Right cardiac atrium (tissue), 5 donors: ENCODE measurements at regions of chr2 and their contacts with region 1.

Region 1: GRCh38 chr2:172931918-172932520 is 143.6 kb upstream of the MAP3K20 start:
- DNase-seq: peak; percentile 70 to 83 (median 73)
- ATAC-seq: peak in 1 of 2 donors; percentile 29
- H3K4me3 ChIP-seq: peak overlapping the region; percentile 37
- H3K27ac ChIP-seq: no peak overlapping the region
- H3K4me1 ChIP-seq: peaks cover 10% of the 10 kb centered on the region
- H3K27me3 ChIP-seq: no peaks in the 10 kb centered on the region

Region 2: DNA sequence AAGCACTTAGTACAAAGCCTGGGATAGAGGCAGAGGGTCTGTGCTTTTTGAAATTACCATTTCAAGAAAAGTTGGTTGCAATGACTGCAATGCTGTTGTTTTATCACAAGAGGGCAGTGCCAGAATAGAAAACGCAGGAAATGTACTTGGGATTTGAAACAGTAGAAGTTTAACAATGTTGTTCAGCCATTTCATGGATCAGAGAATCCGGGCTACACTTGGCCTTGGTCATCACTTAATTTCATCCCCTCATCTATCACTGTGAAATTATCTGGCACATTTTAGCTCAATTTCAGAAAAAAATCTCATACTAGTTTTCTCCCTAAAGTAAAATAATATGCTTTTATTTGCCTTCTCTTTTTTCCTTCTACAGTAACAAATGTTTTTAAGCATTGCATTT is 125.5 kb before region 1 on chr2:
- intact Hi-C with region 1: loop called in 3 of 4 experiments (anchors 5 kb)
- DNase-seq: no peak
- ATAC-seq: peak; percentile 55 to 65
- H3K4me3 ChIP-seq: no peak overlapping the region
- H3K27ac ChIP-seq: no peak overlapping the region
- H3K4me1 ChIP-seq: no peaks in the 10 kb centered on the region
- H3K27me3 ChIP-seq: no peaks in the 10 kb centered on the region

Region 3: DNA sequence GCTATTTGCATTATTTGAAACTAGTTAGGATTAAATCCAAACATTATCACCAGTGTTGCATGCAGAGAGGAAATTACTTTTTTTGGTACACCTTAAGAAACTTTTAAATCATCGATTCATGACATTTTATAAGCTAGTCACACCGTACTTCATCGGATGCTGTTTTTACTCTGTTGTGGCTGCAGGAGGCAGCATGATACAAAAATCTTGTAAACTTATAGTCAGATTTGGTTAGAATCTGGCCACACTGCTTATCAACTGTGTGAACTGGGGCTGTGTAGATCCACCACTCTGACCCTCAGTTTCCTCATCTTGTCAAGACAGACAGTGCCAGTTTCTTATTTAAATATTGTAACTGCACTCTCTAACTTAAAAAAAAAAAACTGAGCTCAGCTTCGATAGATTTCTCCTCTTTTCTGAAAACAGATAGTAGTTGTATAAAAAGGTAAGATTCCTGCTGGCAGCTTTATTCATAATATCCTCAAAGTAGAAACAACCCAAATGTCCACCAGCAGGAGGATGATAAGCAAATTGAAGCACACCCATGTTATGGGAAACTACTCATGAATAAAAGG is 118.6 kb before region 1 on chr2:
- intact Hi-C with region 1: loop called (anchors 2 to 5 kb)
- DNase-seq: no peak
- ATAC-seq: peak in 1 of 2 donors; percentile 76
- H3K4me3 ChIP-seq: no peak overlapping the region
- H3K27ac ChIP-seq: no peak overlapping the region
- H3K4me1 ChIP-seq: no peaks in the 10 kb centered on the region
- H3K27me3 ChIP-seq: no peaks in the 10 kb centered on the region

Region 4: DNA sequence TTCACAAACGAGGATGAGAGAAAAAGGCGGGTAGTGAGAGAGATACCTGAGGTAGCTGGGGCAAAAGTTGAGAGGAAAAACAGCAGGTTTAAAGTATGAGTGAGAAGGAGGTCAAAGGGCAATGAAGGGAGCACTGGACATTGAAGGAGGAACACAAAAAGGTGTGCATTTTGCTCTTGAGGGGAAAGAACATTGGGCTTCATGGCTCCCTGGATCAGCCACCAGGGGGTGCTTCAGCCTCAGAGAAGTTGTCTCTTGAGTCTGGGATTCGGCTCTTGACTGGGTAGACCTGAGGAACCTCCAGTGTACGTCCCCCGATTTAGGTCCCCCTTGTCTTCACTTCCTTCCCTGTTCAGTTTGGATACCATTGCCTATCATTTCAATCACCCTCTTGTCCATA is 67.8 kb before region 1 on chr2:
- intact Hi-C with region 1: loop called in 3 of 4 experiments (anchors 5 kb)
- DNase-seq: peak; percentile 47 to 84 (median 69)
- ATAC-seq: peak; percentile 40 to 74
- H3K4me3 ChIP-seq: no peak overlapping the region
- H3K27ac ChIP-seq: no peak overlapping the region
- H3K4me1 ChIP-seq: peaks cover 8% of the 10 kb centered on the region
- H3K27me3 ChIP-seq: no peaks in the 10 kb centered on the region

Region 5: DNA sequence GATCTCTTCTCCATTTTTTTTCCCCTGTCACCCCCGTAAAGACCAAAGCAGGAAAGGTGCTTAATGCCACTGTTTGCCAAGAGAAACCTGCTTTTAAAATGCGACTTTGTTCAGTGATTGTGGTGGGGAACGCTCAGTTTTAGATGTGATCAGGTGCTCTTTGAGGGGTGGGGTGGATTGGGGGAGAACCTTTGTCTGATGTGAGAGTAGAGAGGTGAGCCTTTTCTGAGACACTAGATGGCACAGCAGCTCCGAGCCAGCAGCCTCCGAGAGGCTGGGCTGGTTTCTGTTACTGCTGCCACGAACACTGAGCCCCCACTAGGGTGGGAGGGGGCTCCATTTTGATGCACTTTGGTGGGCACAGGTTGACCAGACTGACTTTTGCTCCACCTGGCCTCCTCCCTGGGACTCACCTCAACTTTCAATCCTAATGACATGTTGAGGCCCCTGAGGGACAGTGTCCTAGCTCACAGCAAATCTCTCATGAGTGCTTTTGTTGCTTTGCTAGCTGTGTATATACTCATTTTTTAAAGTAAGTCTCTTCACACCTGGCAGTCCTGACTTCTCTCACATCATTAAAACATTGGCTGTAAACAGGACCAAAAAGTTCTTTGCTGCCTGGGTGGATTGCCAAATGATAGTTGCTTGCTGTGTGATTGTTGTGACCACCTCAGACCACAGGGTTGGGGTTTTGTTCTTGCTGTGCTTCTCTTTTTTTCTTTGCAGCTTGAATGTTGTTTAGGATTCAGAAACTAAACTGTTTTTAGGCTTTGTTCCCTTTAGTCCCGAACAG is 45.4 kb after region 1 on chr2:
- intact Hi-C with region 1: no loop called
- DNase-seq: no peak
- ATAC-seq: peak; percentile 35 to 47
- H3K4me3 ChIP-seq: no peak overlapping the region
- H3K27ac ChIP-seq: no peak overlapping the region
- H3K4me1 ChIP-seq: no peaks in the 10 kb centered on the region
- H3K27me3 ChIP-seq: no peaks in the 10 kb centered on the region

Region 6: DNA sequence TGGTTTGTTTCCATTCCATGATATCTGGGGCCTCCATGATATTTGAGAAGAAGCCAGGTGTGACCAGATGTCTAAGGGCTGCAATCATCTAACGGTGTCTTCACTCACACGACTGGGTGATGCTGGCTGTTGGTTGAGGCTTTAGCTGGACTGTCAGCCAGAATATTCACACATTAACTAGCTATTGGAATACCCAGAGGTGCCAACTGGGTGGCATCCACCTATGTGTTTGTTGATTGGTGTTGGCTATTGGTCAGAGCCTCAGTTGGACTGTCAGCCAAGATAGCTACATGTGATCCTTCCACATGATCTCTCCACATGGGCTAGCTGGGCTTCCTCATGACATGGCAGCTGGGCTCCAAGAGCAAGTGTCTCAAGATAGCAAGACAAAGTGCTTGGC is 540.1 kb after region 1 on chr2:
- intact Hi-C with region 1: no loop called
- DNase-seq: no peak
- ATAC-seq: no peak
- H3K4me3 ChIP-seq: no peak overlapping the region
- H3K27ac ChIP-seq: no peak overlapping the region
- H3K4me1 ChIP-seq: no peaks in the 10 kb centered on the region
- H3K27me3 ChIP-seq: no peaks in the 10 kb centered on the region